ENCODE measurements at regions of chr14 and their contacts with region 1.

Region 1: DNA sequence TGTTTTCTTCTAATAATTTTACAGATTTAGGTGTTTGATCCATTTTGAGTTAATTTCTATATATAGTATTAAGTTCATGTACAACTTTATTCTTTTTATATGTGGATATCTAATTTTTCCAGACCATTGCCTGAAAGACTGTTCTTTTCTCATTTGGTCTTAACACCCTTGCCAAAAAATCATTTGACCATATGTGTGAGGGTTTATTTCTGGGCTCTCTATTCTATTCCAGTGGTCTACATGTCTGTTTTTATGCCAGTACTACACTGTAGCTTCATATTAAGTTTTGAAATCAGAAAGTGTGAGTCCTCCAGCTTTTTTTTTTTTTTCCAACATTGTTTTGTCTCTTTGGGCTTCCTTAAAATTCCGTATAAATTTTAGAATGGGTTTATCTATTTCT is 554.1 kb downstream of the KCNH5 start:
- DNase-seq: no peak
- H3K4me3 Mint-ChIP-seq: no peak overlapping the region
- H3K27ac Mint-ChIP-seq: no peak overlapping the region
- H3K4me1 Mint-ChIP-seq: peaks cover 5% of the 10 kb centered on the region
- H3K27me3 Mint-ChIP-seq: no peaks in the 10 kb centered on the region
- CTCF ChIP-seq: no peak

Region 2: GRCh38 chr14:61160798-61161197 is 1330.3 kb before region 1 on chr14:
- CTCF ChIA-PET with region 1: no interaction called
- POLR2A ChIA-PET with region 1: no interaction called
- intact Hi-C with region 1: loop called (anchors 10 kb)
- DNase-seq: no peak
- H3K4me3 Mint-ChIP-seq: no peak overlapping the region
- H3K27ac Mint-ChIP-seq: no peak overlapping the region
- H3K4me1 Mint-ChIP-seq: no peaks in the 10 kb centered on the region
- H3K27me3 Mint-ChIP-seq: no peaks in the 10 kb centered on the region
- CTCF ChIP-seq: no peak

Region 3: DNA sequence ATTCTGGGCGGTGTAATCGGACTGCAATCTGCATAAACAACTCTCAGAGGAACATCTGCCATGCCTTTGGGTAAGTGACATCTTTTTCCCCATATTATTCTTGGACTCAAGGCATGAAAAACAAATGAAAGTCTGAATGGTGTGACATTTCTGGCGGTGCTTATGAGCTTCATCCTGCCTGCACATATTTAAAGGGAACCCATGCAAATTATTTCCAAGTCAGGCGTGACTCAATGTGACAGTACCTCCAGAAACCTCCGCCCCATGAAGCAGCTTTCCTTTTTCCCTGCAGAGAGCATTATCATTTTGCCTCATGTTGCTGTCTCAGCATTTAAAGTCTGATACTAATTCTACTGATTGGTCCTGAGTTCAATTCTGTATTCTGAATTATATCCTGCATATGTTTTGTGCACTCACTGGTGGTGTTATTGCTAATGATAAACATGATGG is 143.6 kb before region 1 on chr14:
- CTCF ChIA-PET with region 1: no interaction called
- POLR2A ChIA-PET with region 1: no interaction called
- intact Hi-C with region 1: loop called (anchors 10 kb)
- DNase-seq: no peak
- H3K4me3 Mint-ChIP-seq: no peak overlapping the region
- H3K27ac Mint-ChIP-seq: no peak overlapping the region
- H3K4me1 Mint-ChIP-seq: no peaks in the 10 kb centered on the region
- H3K27me3 Mint-ChIP-seq: no peaks in the 10 kb centered on the region
- CTCF ChIP-seq: no peak

Region 4: DNA sequence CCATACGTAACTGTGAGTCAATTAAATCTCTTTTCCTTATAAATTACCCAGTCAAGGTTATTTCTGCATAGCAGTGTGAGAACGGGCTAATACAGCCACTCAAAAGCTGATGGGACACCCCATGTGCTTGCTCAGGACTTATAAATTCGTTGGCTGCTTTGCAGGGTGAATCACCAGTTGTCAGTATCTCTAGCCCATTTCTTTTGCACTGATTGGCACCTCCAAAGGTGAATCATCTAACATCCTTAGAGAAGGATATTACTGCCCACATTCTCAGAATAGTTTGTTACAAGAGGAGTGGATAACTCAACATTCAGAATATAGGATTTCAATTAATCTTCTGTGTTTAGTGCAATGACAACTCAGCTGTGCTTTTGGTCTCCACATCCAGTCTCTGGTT is 47.4 kb before region 1 on chr14:
- CTCF ChIA-PET with region 1: no interaction called
- POLR2A ChIA-PET with region 1: no interaction called
- intact Hi-C with region 1: no loop called
- DNase-seq: peak; percentile 56
- H3K4me3 Mint-ChIP-seq: no peak overlapping the region
- H3K27ac Mint-ChIP-seq: no peak overlapping the region
- H3K4me1 Mint-ChIP-seq: peaks cover 11% of the 10 kb centered on the region
- H3K27me3 Mint-ChIP-seq: no peaks in the 10 kb centered on the region
- CTCF ChIP-seq: no peak